ENCODE measurements at regions of chr11 and their contacts with region 1.

Region 1: GRCh38 chr11:1832211-1832919 is 2.4 kb upstream of the SYT8 start:
- DNase-seq: no peak
- H3K4me3 ChIP-seq: no peak overlapping the region
- H3K27ac ChIP-seq: no peak overlapping the region
- H3K4me1 ChIP-seq: peaks cover 2% of the 10 kb centered on the region
- H3K27me3 ChIP-seq: no peaks in the 10 kb centered on the region
- CTCF ChIP-seq: peak; percentile 87 to 97
- POLR2A ChIP-seq: no peak

Region 2: GRCh38 chr11:1701091-1701807 is 131.1 kb before region 1 on chr11:
- CTCF ChIA-PET with region 1: interaction called, 22 read pairs
- POLR2A ChIA-PET with region 1: no interaction called
- dilution Hi-C with region 1: no loop called
- intact Hi-C with region 1: no loop called
- DNase-seq: no peak
- H3K4me3 ChIP-seq: no peak overlapping the region
- H3K27ac ChIP-seq: no peak overlapping the region
- H3K4me1 ChIP-seq: peaks cover 8% of the 10 kb centered on the region
- H3K27me3 ChIP-seq: no peaks in the 10 kb centered on the region
- CTCF ChIP-seq: no peak
- POLR2A ChIP-seq: no peak

Region 3: DNA sequence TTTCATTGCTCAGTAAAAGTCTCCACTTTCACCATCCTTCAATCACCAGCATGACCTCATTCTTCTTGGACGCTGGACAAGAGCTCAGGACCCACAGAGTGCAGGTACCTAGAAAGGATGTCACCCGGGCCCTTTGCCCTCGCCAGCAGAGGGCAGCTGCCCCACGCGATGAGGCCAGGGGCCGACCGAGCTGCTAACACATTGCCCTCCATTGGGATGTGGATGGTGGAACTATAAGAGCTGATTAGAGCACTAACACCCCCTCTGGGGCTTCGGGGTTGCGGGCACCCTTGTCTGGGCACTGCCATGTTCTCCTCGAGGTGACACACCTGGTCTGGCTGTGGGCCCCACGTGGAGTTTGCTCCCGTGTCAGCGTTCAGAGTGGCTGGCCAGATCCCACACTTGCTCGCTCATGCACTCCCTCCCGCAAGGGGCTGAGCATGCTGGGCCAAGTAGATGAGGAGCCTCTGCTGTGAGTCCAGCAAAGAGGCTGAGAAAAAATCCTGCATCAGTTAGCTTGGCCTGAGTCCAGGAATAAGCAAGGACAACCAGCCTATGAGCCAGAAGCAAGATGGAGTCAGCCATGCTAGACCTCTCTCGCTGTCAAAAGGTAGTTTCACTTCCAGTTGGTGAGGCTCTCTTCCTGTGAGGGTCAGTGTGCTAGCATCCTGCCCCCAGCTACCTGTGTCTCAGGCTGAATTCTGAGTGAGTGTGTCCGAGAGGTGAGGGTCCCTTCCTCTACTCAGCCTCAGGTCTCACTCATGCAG is 125.5 kb before region 1 on chr11:
- CTCF ChIA-PET with region 1: interaction called, 19 read pairs
- POLR2A ChIA-PET with region 1: no interaction called
- dilution Hi-C with region 1: no loop called
- intact Hi-C with region 1: no loop called
- DNase-seq: no peak
- H3K4me3 ChIP-seq: no peak overlapping the region
- H3K27ac ChIP-seq: no peak overlapping the region
- H3K4me1 ChIP-seq: no peaks in the 10 kb centered on the region
- H3K27me3 ChIP-seq: no peaks in the 10 kb centered on the region
- CTCF ChIP-seq: no peak
- POLR2A ChIP-seq: no peak

Region 4: DNA sequence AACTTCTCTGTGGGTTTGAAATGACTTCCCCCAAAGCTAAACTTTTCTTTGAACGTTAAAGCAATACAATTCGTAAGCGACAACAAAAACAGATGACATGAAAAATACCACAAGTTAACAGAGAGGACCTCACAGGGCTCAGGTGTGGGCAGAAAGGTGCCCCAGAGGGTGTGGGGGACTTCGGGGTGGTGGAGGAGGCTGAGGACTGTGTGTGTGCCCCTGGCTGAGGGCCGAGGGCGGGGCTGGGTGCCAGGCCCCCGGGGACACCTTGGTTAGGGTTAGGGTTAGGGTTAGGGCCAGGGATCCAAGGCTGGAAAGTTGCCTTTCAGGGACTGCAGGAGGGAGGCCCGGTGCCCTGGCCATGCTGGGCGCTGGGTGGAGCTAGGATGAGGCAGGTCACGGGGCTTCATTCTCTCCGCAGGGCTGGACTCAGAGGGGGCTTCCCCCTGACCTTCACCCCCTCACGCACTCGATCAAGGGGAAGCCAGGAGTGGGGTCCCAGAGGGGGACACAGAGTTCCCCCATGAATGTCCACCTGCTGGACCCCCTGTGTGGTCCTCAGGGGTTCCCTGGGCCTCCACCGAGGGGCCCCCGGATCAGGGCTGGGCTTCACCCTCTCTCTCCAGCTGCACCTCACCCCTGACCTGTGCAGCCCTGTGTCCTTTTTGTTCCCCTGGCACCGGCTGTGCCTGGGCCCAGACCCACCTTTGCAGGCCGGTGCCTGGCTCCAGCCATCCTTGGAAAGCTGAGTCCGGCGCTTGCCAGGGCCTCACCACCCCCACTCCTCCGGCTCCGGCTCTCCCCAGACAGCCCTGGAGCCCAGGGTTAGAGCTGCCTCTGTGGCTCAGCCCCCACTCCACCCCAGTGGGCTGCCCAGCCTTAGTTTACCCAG is 13.4 kb after region 1 on chr11:
- CTCF ChIA-PET with region 1: interaction called, 15 read pairs
- POLR2A ChIA-PET with region 1: no interaction called
- dilution Hi-C with region 1: no loop called
- intact Hi-C with region 1: no loop called
- DNase-seq: no peak
- H3K4me3 ChIP-seq: no peak overlapping the region
- H3K27ac ChIP-seq: no peak overlapping the region
- H3K4me1 ChIP-seq: no peaks in the 10 kb centered on the region
- H3K27me3 ChIP-seq: no peaks in the 10 kb centered on the region
- CTCF ChIP-seq: no peak
- POLR2A ChIP-seq: no peak

Region 5: DNA sequence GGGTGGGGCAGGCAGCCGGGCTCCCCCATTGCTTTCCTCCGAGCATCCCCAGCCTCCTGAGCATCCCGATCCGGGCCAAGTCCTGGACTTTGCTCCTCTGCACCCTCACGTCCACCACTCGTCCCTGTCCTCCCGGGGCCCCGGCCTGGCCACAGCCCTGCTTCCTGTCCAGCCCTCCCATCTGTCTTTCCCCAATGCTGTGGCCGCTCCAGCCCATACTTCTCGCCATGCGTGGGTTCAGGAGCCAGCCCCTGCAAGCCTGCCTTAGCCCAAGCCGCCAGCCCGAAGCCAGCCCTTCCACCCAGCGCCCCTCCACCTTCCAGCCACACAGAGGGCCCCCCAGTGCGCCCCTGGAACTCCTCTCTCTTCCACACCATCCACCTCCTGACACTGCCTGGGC is 138.6 kb after region 1 on chr11:
- CTCF ChIA-PET with region 1: no interaction called
- POLR2A ChIA-PET with region 1: no interaction called
- dilution Hi-C with region 1: no loop called
- intact Hi-C with region 1: no loop called
- DNase-seq: no peak
- H3K4me3 ChIP-seq: no peak overlapping the region
- H3K27ac ChIP-seq: no peak overlapping the region
- H3K4me1 ChIP-seq: no peaks in the 10 kb centered on the region
- H3K27me3 ChIP-seq: no peaks in the 10 kb centered on the region
- CTCF ChIP-seq: no peak
- POLR2A ChIP-seq: no peak

Region 6: GRCh38 chr11:2725368-2726300 is 893.3 kb after region 1 on chr11:
- CTCF ChIA-PET with region 1: no interaction called
- POLR2A ChIA-PET with region 1: no interaction called
- dilution Hi-C with region 1: no loop called
- intact Hi-C with region 1: no loop called
- DNase-seq: no peak
- H3K4me3 ChIP-seq: no peak overlapping the region
- H3K27ac ChIP-seq: no peak overlapping the region
- H3K4me1 ChIP-seq: no peaks in the 10 kb centered on the region
- H3K27me3 ChIP-seq: peaks cover 0 to 3% of the 10 kb centered on the region in 2 experiments
- CTCF ChIP-seq: no peak
- POLR2A ChIP-seq: no peak

Measured in endothelial cell of umbilical vein (primary cell).